CD8-positive, alpha-beta T cell (primary cell): ENCODE measurements at regions of chr21 and their contacts with region 1.

Region 1: DNA sequence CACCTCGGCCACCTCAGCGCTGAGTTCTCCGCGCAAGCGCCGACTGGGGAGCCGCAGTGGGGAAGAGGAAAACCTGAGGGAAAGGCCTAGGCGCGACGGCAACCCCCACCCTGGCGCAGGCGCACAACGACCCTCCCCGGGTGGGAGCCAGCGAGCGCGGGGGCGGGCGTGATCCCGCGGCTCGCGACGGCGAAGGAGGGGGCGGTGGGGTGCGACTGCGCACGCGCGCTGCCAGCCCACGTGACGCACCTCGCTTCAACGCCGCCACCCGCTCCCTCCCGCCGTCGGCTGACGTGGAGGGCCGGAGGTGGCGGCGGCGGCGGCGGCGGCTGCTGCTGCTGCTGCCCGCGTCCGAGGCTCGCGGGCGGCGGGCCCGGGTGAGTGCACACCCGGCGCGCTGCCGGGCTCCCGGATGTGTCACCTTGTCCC is at the starts of genes PIGP and TTC3:
- DNase-seq: peak; percentile 89 to 99 (median 95)
- ATAC-seq: peak; percentile 62
- H3K4me3 ChIP-seq: peak within 1 kb of the TSS; percentile 86 to 94
- H3K4me3 Mint-ChIP-seq: peak within 1 kb of the TSS; percentile 99
- H3K27ac ChIP-seq: peak within 1 kb of the TSS; percentile 96 to 98
- H3K27ac Mint-ChIP-seq: peak within 1 kb of the TSS; percentile 99
- H3K4me1 ChIP-seq: peaks cover 30% of the 10 kb centered on the region
- H3K4me1 Mint-ChIP-seq: peaks cover 57% of the 10 kb centered on the region
- H3K27me3 ChIP-seq: no peaks in the 10 kb centered on the region
- H3K27me3 Mint-ChIP-seq: no peaks in the 10 kb centered on the region
- CTCF ChIP-seq: no peak
- total RNA-seq, gene PIGP: 11.9 to 12.2 TPM
- total RNA-seq, gene TTC3: 137 to 141 TPM

Region 2: DNA sequence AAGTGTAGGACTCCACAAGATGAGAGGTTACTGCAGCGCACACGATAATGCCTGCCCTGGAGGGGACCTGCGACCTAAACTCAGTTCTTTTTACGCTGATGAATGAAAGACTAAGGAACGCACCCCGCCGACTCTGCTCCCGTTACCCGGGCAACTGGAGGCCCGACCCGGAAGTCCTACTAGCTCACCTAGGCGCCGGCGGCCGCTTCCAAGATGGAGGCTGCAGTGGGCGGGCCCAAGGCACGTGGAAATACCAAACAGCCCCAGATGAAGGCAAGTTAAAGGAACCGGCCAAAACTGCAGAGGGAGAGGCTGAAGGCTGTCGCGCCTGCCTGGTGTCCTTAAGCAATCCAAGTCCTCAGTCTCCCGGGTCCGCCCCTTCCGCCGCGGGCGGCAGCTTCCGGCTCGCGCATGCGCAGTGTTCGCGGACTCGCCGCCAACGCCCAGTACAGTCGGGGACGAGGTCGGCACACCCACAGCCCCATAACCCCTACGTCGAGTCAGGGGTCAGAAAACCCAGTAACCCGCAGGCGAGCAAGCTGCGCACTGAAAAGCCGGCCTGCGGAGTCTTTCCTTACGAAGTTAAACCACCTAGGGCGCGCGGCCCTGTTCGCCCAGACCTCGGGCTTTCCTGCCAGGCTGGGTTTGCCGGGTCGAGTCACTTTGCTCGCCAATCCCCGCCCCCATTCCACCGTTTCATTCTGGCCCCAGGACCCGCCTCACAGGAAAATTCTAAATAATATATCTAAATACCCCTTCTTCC is 1012.7 kb before region 1 on chr21 and contains the start of gene SETD4:
- CTCF ChIA-PET with region 1: no interaction called
- POLR2A ChIA-PET with region 1: no interaction called
- intact Hi-C with region 1: loop called in 1 of 2 experiments (anchors 10 kb)
- DNase-seq: peak; percentile 80 to 97 (median 92)
- ATAC-seq: peak; percentile 87
- H3K4me3 ChIP-seq: peak within 1 kb of the TSS; percentile 88 to 99
- H3K4me3 Mint-ChIP-seq: peak within 1 kb of the TSS; percentile 96
- H3K27ac ChIP-seq: peak within 1 kb of the TSS; percentile 69 to 90
- H3K27ac Mint-ChIP-seq: peak within 1 kb of the TSS; percentile 98
- H3K4me1 ChIP-seq: peaks cover 4% of the 10 kb centered on the region
- H3K4me1 Mint-ChIP-seq: peaks cover 27% of the 10 kb centered on the region
- H3K27me3 ChIP-seq: no peaks in the 10 kb centered on the region
- H3K27me3 Mint-ChIP-seq: no peaks in the 10 kb centered on the region
- CTCF ChIP-seq: no peak
- total RNA-seq, gene SETD4: 13.9 to 15.4 TPM

Region 3: GRCh38 chr21:36989699-36990507 is 83.1 kb before region 1 on chr21:
- CTCF ChIA-PET with region 1: no interaction called
- POLR2A ChIA-PET with region 1: interaction called, 3 read pairs
- intact Hi-C with region 1: loop called (anchors 1 to 5 kb)
- DNase-seq: peak; percentile 57 to 94 (median 82)
- ATAC-seq: peak; percentile 70
- H3K4me3 ChIP-seq: peak overlapping the region; percentile 59 to 63
- H3K4me3 Mint-ChIP-seq: peak overlapping the region; percentile 87
- H3K27ac ChIP-seq: peak overlapping the region; percentile 48 to 86
- H3K27ac Mint-ChIP-seq: peak overlapping the region; percentile 91
- H3K4me1 ChIP-seq: peaks cover 6% of the 10 kb centered on the region
- H3K4me1 Mint-ChIP-seq: peaks cover 22% of the 10 kb centered on the region
- H3K27me3 ChIP-seq: no peaks in the 10 kb centered on the region
- H3K27me3 Mint-ChIP-seq: no peaks in the 10 kb centered on the region
- CTCF ChIP-seq: peak; percentile 81

Region 4: DNA sequence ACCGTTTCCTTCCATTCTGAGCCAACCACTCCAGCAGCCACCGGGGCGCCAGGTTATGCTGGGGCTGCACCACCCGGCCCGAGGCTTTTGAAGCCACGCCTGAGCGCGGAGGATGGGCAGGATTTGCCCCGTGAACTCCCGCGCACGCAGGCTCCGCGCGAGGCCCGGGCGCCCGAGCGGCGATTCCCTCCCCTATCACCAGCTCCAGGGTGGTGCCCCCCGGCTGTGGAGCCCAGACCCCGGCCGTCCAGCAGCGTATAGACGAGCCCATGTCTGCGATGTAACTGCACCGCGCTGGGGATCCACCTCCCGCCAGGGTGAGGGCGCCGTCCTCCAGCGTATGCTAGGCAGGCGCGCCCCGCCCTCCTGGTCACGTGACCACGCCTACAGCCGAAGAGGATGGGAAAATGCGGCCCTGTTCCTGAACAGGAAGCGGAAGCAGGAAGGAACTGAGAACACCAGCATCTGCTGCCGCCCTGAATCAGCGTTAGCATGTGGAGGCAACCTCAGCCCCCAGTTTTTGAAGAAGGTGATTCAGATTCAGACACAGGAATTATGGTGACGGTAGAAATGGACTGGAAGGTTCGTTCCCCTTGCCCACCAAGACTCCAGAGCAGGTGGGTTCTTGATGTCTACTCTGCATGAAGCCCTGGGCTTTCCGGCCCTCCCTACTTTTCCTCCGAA is 148.1 kb after region 1 on chr21:
- CTCF ChIA-PET with region 1: no interaction called
- POLR2A ChIA-PET with region 1: no interaction called
- intact Hi-C with region 1: loop called (anchors 2 kb)
- DNase-seq: peak; percentile 82 to 96 (median 95)
- ATAC-seq: peak; percentile 79
- H3K4me3 ChIP-seq: peak overlapping the region; percentile 92
- H3K4me3 Mint-ChIP-seq: peak overlapping the region; percentile 81
- H3K27ac ChIP-seq: peak overlapping the region; percentile 82
- H3K27ac Mint-ChIP-seq: peak overlapping the region; percentile 93
- H3K4me1 ChIP-seq: peaks cover 42% of the 10 kb centered on the region
- H3K4me1 Mint-ChIP-seq: peaks cover 50% of the 10 kb centered on the region
- H3K27me3 ChIP-seq: no peaks in the 10 kb centered on the region
- H3K27me3 Mint-ChIP-seq: no peaks in the 10 kb centered on the region
- CTCF ChIP-seq: peak; percentile 53

Region 5: GRCh38 chr21:38805328-38806152 is 1732.5 kb after region 1 on chr21 and contains the start of gene ETS2:
- CTCF ChIA-PET with region 1: no interaction called
- POLR2A ChIA-PET with region 1: no interaction called
- intact Hi-C with region 1: loop called in 1 of 2 experiments (anchors 10 kb)
- DNase-seq: peak; percentile 33 to 84 (median 63)
- ATAC-seq: peak; percentile 83
- H3K4me3 ChIP-seq: peak within 1 kb of the TSS; percentile 74 to 79
- H3K4me3 Mint-ChIP-seq: peak within 1 kb of the TSS; percentile 84
- H3K27ac ChIP-seq: peak within 1 kb of the TSS; percentile 51 to 59
- H3K27ac Mint-ChIP-seq: peak within 1 kb of the TSS; percentile 73
- H3K4me1 ChIP-seq: peaks cover 8% of the 10 kb centered on the region
- H3K4me1 Mint-ChIP-seq: peaks cover 31% of the 10 kb centered on the region
- H3K27me3 ChIP-seq: no peaks in the 10 kb centered on the region
- H3K27me3 Mint-ChIP-seq: peaks cover 2% of the 10 kb centered on the region
- CTCF ChIP-seq: no peak
- total RNA-seq, gene ETS2: 8.1 to 10.0 TPM